ENCODE measurements at regions of chrX and their contacts with region 1.

Region 1: GRCh38 chrX:53317365-53318069 is 36.1 kb upstream of the IQSEC2 start:
- DNase-seq: peak; percentile 69
- ATAC-seq: peak; percentile 77

Region 2: DNA sequence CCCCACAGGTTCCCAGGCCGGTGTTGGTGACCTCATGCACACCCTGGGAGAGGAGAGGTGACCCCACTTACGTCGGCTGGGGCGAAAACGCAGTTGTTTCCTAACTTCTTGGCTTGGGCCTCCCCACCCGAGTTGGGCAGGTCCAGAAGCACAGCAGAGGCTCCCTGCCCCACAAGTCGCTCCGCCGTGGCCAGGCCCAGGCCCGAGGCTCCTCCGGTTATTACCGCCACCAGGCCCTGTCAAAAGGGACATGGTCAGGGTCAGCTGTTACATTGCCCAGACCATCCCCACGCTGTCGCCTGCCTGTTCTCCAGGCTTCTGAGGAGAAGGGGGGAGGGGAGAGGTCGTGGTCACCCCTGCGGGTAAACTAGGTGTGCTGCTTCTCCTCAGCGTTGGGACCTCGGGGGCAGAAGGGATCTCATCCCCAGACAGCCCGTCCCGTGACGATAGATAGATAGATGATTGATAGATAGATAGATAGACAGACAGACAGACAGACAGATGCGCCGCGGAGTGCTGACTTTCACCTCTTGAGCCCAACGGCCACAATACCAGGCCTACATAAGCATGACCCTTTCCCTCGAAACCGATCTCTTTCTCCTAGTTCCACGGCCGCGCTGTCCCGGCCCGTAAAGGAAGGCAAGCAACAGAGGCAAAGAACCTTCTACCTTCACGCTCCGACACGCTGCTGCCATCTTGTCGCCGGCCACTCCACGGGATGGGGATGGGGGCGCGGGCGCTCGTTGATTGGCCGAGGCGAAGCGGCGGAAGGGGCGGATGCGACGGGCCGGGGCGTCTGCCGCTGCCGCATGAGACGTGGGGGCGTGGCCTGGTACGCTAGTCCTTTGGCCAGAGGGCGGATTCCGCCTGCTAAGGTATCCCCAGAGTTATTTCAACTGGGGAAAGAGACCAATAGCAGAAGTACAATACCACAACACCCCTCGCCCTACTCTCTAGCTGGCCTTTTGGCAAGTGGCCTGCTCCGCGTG is 116.4 kb after region 1 on chrX and contains the start of gene HSD17B10:
- intact Hi-C with region 1: loop called (anchors 10 kb)
- DNase-seq: peak; percentile 94
- ATAC-seq: peak; percentile 100
- total RNA-seq, gene HSD17B10: 102 TPM